ENCODE measurements at regions of chr1 and their contacts with region 1.

Region 1: DNA sequence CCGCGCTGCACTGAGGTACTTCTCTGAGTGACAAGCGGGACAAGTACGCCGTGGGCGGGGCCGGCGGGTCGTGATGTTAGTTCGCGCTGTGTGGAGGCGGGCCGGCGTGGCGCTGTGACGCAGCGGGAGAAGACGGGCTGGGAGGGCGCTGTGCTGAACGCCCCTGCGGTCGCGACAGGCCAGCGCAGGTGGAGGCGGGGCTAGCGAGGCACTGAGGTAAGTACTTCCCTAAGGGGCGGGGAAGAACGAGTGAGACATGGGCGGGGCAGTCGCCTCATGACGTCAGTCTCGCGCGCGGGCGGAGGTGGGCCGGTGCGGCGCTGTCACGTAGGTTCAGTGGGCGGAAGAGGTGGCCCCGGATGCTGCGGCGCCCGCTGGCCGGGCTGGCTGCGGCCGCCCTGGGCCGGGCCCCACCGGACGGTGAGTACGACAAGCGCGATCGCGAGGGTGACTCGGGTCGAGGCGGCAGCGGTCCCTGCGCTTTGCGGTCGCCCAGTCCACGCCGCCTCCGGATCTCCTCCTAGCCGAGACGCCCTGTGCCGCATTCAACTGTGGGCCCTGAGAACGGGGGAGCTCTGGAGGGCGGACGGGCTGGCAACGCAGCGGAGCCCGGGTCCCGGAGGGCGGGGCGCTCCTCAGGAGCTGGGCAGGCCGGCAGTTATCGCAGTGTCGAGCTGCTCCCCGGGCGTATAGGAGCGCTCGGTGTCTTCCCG is at the start of gene GUK1:
- DNase-seq: peak; percentile 96
- ATAC-seq: peak; percentile 90
- H3K4me3 ChIP-seq: peak within 1 kb of the TSS; percentile 94 to 98 (median 96)
- H3K27ac ChIP-seq: peak within 1 kb of the TSS; percentile 75
- H3K4me1 ChIP-seq: peaks cover 42% of the 10 kb centered on the region
- H3K27me3 ChIP-seq: no peaks in the 10 kb centered on the region; a peak in 1 of 5 replicates
- CTCF ChIP-seq: peak; percentile 83
- EP300 ChIP-seq: no peak
- POLR2A ChIP-seq: peak in 1 of 2 experiments; percentile 92; a peak in 2 of 4 replicates
- RAD21 ChIP-seq: 0 out of 2 replicates have a peak, but pooled peaks have one; percentile 26
- total RNA-seq, gene GUK1: 82.7 and 116 TPM in 2 replicates

Region 2: GRCh38 chr1:228109073-228109961 is 30.8 kb before region 1 on chr1 and contains the start of gene MRPL55:
- CTCF ChIA-PET with region 1: no interaction called
- POLR2A ChIA-PET with region 1: no interaction called
- in situ Hi-C with region 1: no loop called
- intact Hi-C with region 1: loop called (anchors 2 kb)
- DNase-seq: peak; percentile 92
- ATAC-seq: peak; percentile 80
- H3K4me3 ChIP-seq: peak within 1 kb of the TSS; percentile 90 to 99 (median 97)
- H3K27ac ChIP-seq: peak within 1 kb of the TSS; percentile 90
- H3K4me1 ChIP-seq: peaks cover 34% of the 10 kb centered on the region
- H3K27me3 ChIP-seq: no peaks in the 10 kb centered on the region; a peak in 1 of 5 replicates
- CTCF ChIP-seq: peak; percentile 57
- EP300 ChIP-seq: peak; percentile 5 to 29; a peak in 1 of 4 replicates
- POLR2A ChIP-seq: peak in 1 of 2 experiments; percentile 95; a peak in 2 of 4 replicates
- RAD21 ChIP-seq: no peak
- total RNA-seq, gene MRPL55: 92.9 and 97.9 TPM in 2 replicates

Region 3: GRCh38 chr1:228150461-228151179 is 10.5 kb after region 1 on chr1:
- CTCF ChIA-PET with region 1: no interaction called
- POLR2A ChIA-PET with region 1: interaction called, 11 read pairs
- in situ Hi-C with region 1: no loop called
- intact Hi-C with region 1: no loop called
- DNase-seq: peak; percentile 41
- ATAC-seq: peak; percentile 72
- H3K4me3 ChIP-seq: peak overlapping the region; percentile 54 to 78 (median 63)
- H3K27ac ChIP-seq: peak overlapping the region; percentile 73
- H3K4me1 ChIP-seq: peaks cover 34% of the 10 kb centered on the region
- H3K27me3 ChIP-seq: no peaks in the 10 kb centered on the region
- CTCF ChIP-seq: no peak
- EP300 ChIP-seq: no peak
- POLR2A ChIP-seq: no peak
- RAD21 ChIP-seq: no peak

Region 4: DNA sequence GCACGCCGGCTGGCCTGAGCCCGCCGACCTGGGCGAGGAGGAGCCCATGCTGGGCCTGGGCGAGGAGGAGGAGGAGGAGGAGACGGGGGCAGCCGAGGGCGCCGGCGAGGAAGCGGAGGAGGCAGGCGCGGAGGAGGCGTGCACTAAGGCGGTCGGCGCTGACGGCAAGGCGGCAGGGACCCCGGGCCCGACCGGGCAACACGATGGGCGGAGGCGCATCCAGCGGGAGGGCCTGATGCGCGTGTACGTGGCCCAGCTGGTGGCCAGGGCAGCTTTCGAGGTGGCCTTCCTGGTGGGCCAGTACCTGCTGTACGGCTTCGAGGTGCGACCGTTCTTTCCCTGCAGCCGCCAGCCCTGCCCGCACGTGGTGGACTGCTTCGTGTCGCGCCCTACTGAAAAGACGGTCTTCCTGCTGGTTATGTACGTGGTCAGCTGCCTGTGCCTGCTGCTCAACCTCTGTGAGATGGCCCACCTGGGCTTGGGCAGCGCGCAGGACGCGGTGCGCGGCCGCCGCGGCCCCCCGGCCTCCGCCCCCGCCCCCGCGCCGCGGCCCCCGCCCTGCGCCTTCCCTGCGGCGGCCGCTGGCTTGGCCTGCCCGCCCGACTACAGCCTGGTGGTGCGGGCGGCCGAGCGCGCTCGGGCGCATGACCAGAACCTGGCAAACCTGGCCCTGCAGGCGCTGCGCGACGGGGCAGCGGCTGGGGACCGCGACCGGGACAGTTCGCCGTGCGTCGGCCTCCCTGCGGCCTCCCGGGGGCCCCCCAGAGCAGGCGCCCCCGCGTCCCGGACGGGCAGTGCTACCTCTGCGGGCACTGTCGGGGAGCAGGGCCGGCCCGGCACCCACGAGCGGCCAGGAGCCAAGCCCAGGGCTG is 18.3 kb after region 1 on chr1:
- CTCF ChIA-PET with region 1: no interaction called
- POLR2A ChIA-PET with region 1: interaction called, 11 read pairs
- in situ Hi-C with region 1: no loop called
- intact Hi-C with region 1: no loop called
- DNase-seq: no peak
- ATAC-seq: no peak
- H3K4me3 ChIP-seq: no peak overlapping the region
- H3K27ac ChIP-seq: no peak overlapping the region
- H3K4me1 ChIP-seq: peaks cover 40% of the 10 kb centered on the region
- H3K27me3 ChIP-seq: no peaks in the 10 kb centered on the region; a peak in 1 of 5 replicates
- CTCF ChIP-seq: no peak
- EP300 ChIP-seq: no peak
- POLR2A ChIP-seq: no peak
- RAD21 ChIP-seq: no peak

Region 5: GRCh38 chr1:228165372-228166169 is 25.5 kb after region 1 on chr1 and contains the start of gene IBA57:
- CTCF ChIA-PET with region 1: interaction called, 3 read pairs
- POLR2A ChIA-PET with region 1: interaction called, 38 read pairs
- in situ Hi-C with region 1: no loop called
- intact Hi-C with region 1: loop called (anchors 1 kb)
- DNase-seq: peak; percentile 95
- ATAC-seq: peak; percentile 85
- H3K4me3 ChIP-seq: peak within 1 kb of the TSS; percentile 61 to 88 (median 84)
- H3K27ac ChIP-seq: peak within 1 kb of the TSS; percentile 99
- H3K4me1 ChIP-seq: peaks cover 50% of the 10 kb centered on the region
- H3K27me3 ChIP-seq: no peaks in the 10 kb centered on the region; a peak in 1 of 5 replicates
- CTCF ChIP-seq: peak; percentile 90
- EP300 ChIP-seq: no peak
- POLR2A ChIP-seq: peak in 1 of 2 experiments; percentile 73; a peak in 2 of 4 replicates
- RAD21 ChIP-seq: peak; percentile 77
- total RNA-seq, gene IBA57: 9.7 and 10.2 TPM in 2 replicates

Region 6: GRCh38 chr1:228174482-228175375 is 34.6 kb after region 1 on chr1:
- CTCF ChIA-PET with region 1: no interaction called
- POLR2A ChIA-PET with region 1: no interaction called
- in situ Hi-C with region 1: loop called (anchors 5 kb)
- intact Hi-C with region 1: no loop called
- DNase-seq: no peak
- ATAC-seq: peak; percentile 28
- H3K4me3 ChIP-seq: no peak overlapping the region
- H3K27ac ChIP-seq: no peak overlapping the region
- H3K4me1 ChIP-seq: no peaks in the 10 kb centered on the region
- H3K27me3 ChIP-seq: no peaks in the 10 kb centered on the region; a peak in 1 of 5 replicates
- CTCF ChIP-seq: no peak
- EP300 ChIP-seq: no peak
- POLR2A ChIP-seq: no peak
- RAD21 ChIP-seq: no peak